Spleen (tissue), 13 donors: ENCODE measurements at regions of chr7 and their contacts with region 1.

Region 1: GRCh38 chr7:65307651-65308299 is 65.9 kb upstream of the ZNF92 start:
- DNase-seq: no peak
- H3K4me3 ChIP-seq: no peak overlapping the region
- H3K27ac ChIP-seq: no peak overlapping the region
- H3K4me1 ChIP-seq: peaks cover 0 to 7% (median 4%) of the 10 kb centered on the region in 6 donors
- H3K27me3 ChIP-seq: peaks cover 0 to 7% (median 0%) of the 10 kb centered on the region in 7 donors
- CTCF ChIP-seq: peak; percentile 55 to 83 (median 76)
- POLR2A ChIP-seq: no peak

Region 2: GRCh38 chr7:64854969-64855368 is 452.8 kb before region 1 on chr7:
- intact Hi-C with region 1: no loop called
- DNase-seq: no peak
- H3K4me3 ChIP-seq: no peak overlapping the region
- H3K27ac ChIP-seq: no peak overlapping the region
- H3K4me1 ChIP-seq: no peaks in the 10 kb centered on the region
- H3K27me3 ChIP-seq: no peaks in the 10 kb centered on the region
- CTCF ChIP-seq: no peak
- POLR2A ChIP-seq: no peak

Region 3: GRCh38 chr7:64951250-64951848 is 356.4 kb before region 1 on chr7:
- intact Hi-C with region 1: loop called (anchors 5 kb)
- DNase-seq: no peak
- H3K4me3 ChIP-seq: no peak overlapping the region
- H3K27ac ChIP-seq: peak overlapping the region in 2 of 8 donors; percentile 37 to 43
- H3K4me1 ChIP-seq: peaks cover 5 to 21% (median 11%) of the 10 kb centered on the region in 6 donors
- H3K27me3 ChIP-seq: peaks cover 0 to 37% (median 14%) of the 10 kb centered on the region in 7 donors
- CTCF ChIP-seq: peak; percentile 60 to 90 (median 83)
- POLR2A ChIP-seq: no peak

Region 4: DNA sequence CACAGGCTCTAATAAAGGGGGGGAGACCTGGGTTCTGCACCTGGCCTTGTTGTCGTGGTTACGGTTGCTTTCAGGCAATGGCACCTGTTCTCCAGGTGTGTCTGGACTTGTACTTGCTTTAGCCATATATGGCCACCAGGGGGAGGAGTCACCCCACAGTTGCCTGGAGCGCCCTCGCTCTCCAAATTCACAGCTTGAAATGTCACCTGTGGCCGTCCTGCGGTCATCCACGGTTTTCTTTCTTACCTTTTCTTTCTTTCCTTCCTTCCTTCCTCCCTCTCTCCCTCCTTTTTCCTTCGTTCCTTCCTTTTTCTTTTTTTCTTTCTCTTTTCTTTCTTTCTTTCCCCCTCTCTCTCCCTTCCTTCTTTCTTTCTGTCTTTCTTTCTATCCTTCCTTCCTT is 91.3 kb before region 1 on chr7:
- intact Hi-C with region 1: loop called (anchors 5 kb)
- DNase-seq: peak; percentile 86
- H3K4me3 ChIP-seq: no peak overlapping the region
- H3K27ac ChIP-seq: no peak overlapping the region
- H3K4me1 ChIP-seq: no peaks in the 10 kb centered on the region
- H3K27me3 ChIP-seq: no peaks in the 10 kb centered on the region
- CTCF ChIP-seq: peak in 10 of 11 experiments; percentile 37 to 80 (median 74)
- POLR2A ChIP-seq: no peak